ENCODE measurements at regions of chr10 and their contacts with region 1.

Region 1: GRCh38 chr10:4241724-4242345 is 456.8 kb upstream of the KLF6 start:
- DNase-seq: peak in 1 of 2 donors; percentile 76
- H3K4me3 ChIP-seq: peak overlapping the region; percentile 53 to 61
- H3K27ac ChIP-seq: peak overlapping the region; percentile 87 to 94
- H3K4me1 ChIP-seq: peaks cover 0 to 18% of the 10 kb centered on the region in 2 donors
- H3K27me3 ChIP-seq: no peaks in the 10 kb centered on the region
- CTCF ChIP-seq: no peak

Region 2: DNA sequence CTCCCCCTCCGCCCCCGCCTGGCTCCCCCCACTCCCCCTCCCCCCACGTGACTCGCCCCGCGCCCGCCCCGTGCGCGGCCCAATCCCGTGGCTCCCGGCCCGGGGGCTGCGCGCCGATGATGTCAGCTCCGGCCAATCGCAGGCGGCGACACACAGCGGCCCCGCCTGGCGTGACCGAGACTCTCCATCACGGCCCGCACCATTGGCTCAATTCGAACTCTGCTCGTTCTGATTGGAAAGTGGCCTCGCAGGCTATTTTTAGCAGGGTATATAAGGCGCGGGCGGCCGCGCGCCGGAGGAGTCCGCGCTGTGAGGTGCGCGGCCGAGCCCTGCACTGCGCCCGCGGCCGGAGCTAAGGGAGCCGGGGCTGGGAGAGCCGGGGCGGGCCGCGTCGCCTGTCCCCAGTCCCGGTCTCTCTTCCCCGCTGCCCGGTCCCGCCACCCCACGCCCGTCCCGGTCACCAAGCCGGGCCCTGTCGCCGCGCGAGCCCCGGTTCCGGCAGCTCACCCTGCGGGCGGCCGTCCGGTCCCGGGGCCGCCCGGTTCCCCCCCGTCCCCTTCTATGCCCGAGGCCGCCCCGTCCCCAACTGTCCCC is 456.5 kb before region 1 on chr10:
- intact Hi-C with region 1: loop called (anchors 2 kb)
- DNase-seq: peak; percentile 94 to 99
- H3K4me3 ChIP-seq: peak overlapping the region; percentile 97 to 99
- H3K27ac ChIP-seq: peak overlapping the region; percentile 100
- H3K4me1 ChIP-seq: peaks cover 0 to 4% of the 10 kb centered on the region in 2 donors
- H3K27me3 ChIP-seq: no peaks in the 10 kb centered on the region
- CTCF ChIP-seq: no peak

Region 3: GRCh38 chr10:3935141-3935540 is 306.7 kb before region 1 on chr10:
- intact Hi-C with region 1: loop called (anchors 5 kb)
- DNase-seq: peak; percentile 17 to 88
- H3K4me3 ChIP-seq: peak overlapping the region; percentile 31 to 49
- H3K27ac ChIP-seq: peak overlapping the region; percentile 83 to 86
- H3K4me1 ChIP-seq: peaks cover 0 to 13% of the 10 kb centered on the region in 2 donors
- H3K27me3 ChIP-seq: no peaks in the 10 kb centered on the region
- CTCF ChIP-seq: peak in 1 of 3 experiments; percentile 9

Region 4: GRCh38 chr10:4344511-4344994 is 102.7 kb after region 1 on chr10:
- intact Hi-C with region 1: loop called (anchors 2 kb)
- DNase-seq: peak; percentile 65 to 96
- H3K4me3 ChIP-seq: no peak overlapping the region
- H3K27ac ChIP-seq: peak overlapping the region; percentile 85 to 89
- H3K4me1 ChIP-seq: peaks cover 13 to 30% of the 10 kb centered on the region in 2 donors
- H3K27me3 ChIP-seq: no peaks in the 10 kb centered on the region
- CTCF ChIP-seq: peak; percentile 7 to 34 (median 14)

Region 5: DNA sequence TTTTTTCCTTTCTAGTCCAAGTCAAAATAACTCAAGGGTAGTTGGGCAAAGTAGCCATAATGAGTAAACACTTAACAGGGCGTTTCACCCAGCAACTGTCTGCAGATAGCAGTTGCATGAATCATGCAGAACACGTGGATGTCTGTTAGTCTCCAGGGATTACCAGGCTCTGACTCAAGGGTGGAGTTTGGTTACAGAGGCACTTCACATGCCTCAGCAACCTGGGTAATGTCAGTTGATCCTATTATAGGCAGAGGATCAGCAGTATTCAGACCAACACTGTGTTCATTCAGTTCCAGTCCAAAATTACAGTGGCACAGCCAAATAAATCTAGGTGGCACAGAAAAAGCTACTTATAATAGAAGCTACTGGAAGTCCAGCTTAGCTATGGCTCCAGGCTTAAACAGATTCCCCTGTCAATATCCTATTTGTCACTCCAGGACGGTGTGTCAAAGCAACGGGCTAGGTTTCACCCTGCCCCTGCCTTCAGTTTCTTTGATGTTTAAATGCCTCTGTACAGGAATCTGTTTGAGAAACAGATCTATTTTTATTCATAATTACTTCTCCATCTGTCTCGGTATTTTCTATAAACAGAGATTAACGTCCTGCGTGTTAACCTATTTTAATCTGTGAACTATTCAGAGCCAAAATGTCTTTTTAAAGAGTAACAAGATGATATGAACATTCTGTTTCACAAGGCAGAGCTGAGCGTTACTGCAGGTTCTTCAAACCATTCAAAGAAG is 421.5 kb after region 1 on chr10:
- intact Hi-C with region 1: loop called (anchors 2 kb)
- DNase-seq: peak; percentile 43 to 93
- H3K4me3 ChIP-seq: peak overlapping the region in 1 of 2 donors; percentile 31
- H3K27ac ChIP-seq: peak overlapping the region; percentile 82 to 94
- H3K4me1 ChIP-seq: peaks cover 11 to 28% of the 10 kb centered on the region in 2 donors
- H3K27me3 ChIP-seq: no peaks in the 10 kb centered on the region
- CTCF ChIP-seq: no peak